ENCODE measurements at regions of chr2 and their contacts with region 1.

Region 1: DNA sequence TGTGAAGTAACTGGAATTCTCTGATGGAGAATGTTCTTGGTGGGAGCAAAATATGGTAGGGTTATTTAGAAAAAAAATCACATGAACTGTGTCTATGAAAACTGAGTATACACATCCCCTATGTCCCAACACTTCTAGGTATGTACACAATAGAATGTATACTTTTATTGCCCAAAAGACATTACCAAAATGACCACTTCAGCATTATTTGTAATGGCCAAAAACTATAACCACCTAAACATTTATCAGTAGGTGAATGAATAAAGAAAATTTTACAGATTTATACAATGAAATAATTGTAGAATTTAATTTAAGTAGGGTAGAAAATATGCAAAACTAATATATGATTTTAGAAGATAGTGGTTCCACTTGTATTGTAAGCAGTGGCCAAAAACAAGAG is 462.8 kb downstream of the KCNJ3 start:
- DNase-seq: no peak
- ATAC-seq: no peak
- H3K4me3 ChIP-seq: no peak overlapping the region
- H3K27ac ChIP-seq: no peak overlapping the region
- H3K4me1 ChIP-seq: no peaks in the 10 kb centered on the region
- H3K27me3 ChIP-seq: no peaks in the 10 kb centered on the region
- CTCF ChIP-seq: no peak
- EP300 ChIP-seq: no peak
- POLR2A ChIP-seq: no peak
- RAD21 ChIP-seq: no peak

Region 2: GRCh38 chr2:154740361-154740760 is 421.0 kb before region 1 on chr2:
- CTCF ChIA-PET with region 1: no interaction called
- POLR2A ChIA-PET with region 1: no interaction called
- RAD21 ChIA-PET with region 1: no interaction called
- SMC1A ChIA-PET with region 1: no interaction called
- in situ Hi-C with region 1: no loop called
- intact Hi-C with region 1: no loop called
- DNase-seq: no peak
- ATAC-seq: no peak
- H3K4me3 ChIP-seq: no peak overlapping the region
- H3K27ac ChIP-seq: no peak overlapping the region
- H3K4me1 ChIP-seq: no peaks in the 10 kb centered on the region
- H3K27me3 ChIP-seq: no peaks in the 10 kb centered on the region
- CTCF ChIP-seq: no peak
- EP300 ChIP-seq: no peak
- POLR2A ChIP-seq: no peak
- RAD21 ChIP-seq: no peak

Region 3: GRCh38 chr2:155035308-155035707 is 126.0 kb before region 1 on chr2:
- CTCF ChIA-PET with region 1: no interaction called
- POLR2A ChIA-PET with region 1: no interaction called
- RAD21 ChIA-PET with region 1: no interaction called
- SMC1A ChIA-PET with region 1: no interaction called
- in situ Hi-C with region 1: no loop called
- intact Hi-C with region 1: no loop called
- DNase-seq: no peak
- ATAC-seq: no peak
- H3K4me3 ChIP-seq: no peak overlapping the region
- H3K27ac ChIP-seq: no peak overlapping the region
- H3K4me1 ChIP-seq: no peaks in the 10 kb centered on the region
- H3K27me3 ChIP-seq: no peaks in the 10 kb centered on the region
- CTCF ChIP-seq: no peak
- EP300 ChIP-seq: no peak
- POLR2A ChIP-seq: no peak
- RAD21 ChIP-seq: no peak

Region 4: GRCh38 chr2:155203207-155203606 is 41.9 kb after region 1 on chr2:
- CTCF ChIA-PET with region 1: no interaction called
- POLR2A ChIA-PET with region 1: no interaction called
- RAD21 ChIA-PET with region 1: no interaction called
- SMC1A ChIA-PET with region 1: interaction called, 3 read pairs
- in situ Hi-C with region 1: no loop called
- intact Hi-C with region 1: loop called (anchors 5 kb)
- DNase-seq: no peak
- ATAC-seq: no peak
- H3K4me3 ChIP-seq: no peak overlapping the region
- H3K27ac ChIP-seq: no peak overlapping the region
- H3K4me1 ChIP-seq: no peaks in the 10 kb centered on the region
- H3K27me3 ChIP-seq: peaks cover 0 to 2% of the 10 kb centered on the region in 2 experiments; a peak in 1 of 4 replicates
- CTCF ChIP-seq: peak in 2 of 3 experiments; percentile 15 to 21; a peak in 1 of 6 replicates
- EP300 ChIP-seq: no peak
- POLR2A ChIP-seq: no peak
- RAD21 ChIP-seq: peak; percentile 58; the same call in 1 of the 2 replicates